PC-3 (cell line): ENCODE measurements at regions of chr1 and their contacts with region 1.

Region 1: GRCh38 chr1:161439280-161440232 is 65.7 kb upstream of the FCGR2A start:
- DNase-seq: peak; percentile 31
- ATAC-seq: no peak
- H3K4me3 ChIP-seq: peak overlapping the region; percentile 79
- H3K27ac ChIP-seq: no peak overlapping the region
- H3K4me1 ChIP-seq: peaks cover 7% of the 10 kb centered on the region
- H3K27me3 ChIP-seq: no peaks in the 10 kb centered on the region
- CTCF ChIP-seq: no peak

Region 2: GRCh38 chr1:161287482-161288054 is 152.0 kb before region 1 on chr1:
- CTCF ChIA-PET with region 1: no interaction called
- POLR2A ChIA-PET with region 1: no interaction called
- intact Hi-C with region 1: no loop called
- DNase-seq: no peak
- ATAC-seq: no peak
- H3K4me3 ChIP-seq: no peak overlapping the region
- H3K27ac ChIP-seq: no peak overlapping the region
- H3K4me1 ChIP-seq: no peaks in the 10 kb centered on the region
- H3K27me3 ChIP-seq: peaks cover 47% of the 10 kb centered on the region
- CTCF ChIP-seq: no peak

Region 3: DNA sequence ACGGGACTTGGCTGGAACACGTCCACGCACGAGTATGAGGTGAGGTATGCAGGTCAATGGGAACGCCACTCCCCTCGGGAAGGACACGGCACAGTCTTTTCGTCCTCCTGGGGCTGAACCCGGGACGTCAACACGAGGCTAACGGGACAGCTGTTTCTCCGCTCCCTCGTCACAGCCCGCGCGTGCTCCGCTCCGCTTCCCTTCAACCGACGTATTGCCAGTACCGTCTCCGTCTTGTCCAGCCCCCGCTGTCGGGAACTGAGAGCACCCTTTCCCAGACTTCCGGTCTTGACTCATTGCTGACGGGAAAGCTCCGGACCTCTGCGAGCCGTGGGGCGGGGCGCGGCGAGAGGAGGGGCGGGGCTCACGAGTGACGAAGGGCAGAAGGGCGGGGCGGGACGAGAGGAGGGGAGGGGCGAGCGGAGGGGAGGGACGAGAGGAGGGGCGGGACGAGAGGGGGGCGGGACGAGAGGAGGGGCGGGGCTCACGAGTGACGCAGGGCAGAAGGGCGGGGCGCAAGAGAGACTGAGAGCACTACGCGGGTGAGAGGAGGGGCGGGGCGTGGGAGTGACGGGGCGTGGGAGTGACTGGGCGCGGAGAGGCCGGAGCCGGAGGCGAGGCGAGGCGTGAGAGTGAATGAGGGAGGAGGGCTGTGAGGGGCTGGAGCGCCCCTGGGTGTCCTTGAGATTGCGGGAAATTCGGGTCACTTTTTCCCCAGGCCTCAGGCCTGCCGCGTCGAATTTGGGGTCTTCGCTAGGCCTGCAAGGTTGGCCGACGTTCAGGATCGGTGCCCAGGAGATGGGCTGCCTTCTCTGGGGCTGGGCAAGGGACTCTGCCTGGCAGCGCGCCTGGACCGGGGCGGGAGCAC is 49.6 kb before region 1 on chr1:
- CTCF ChIA-PET with region 1: no interaction called
- POLR2A ChIA-PET with region 1: no interaction called
- intact Hi-C with region 1: loop called (anchors 10 kb)
- DNase-seq: peak; percentile 98
- ATAC-seq: peak; percentile 87
- H3K4me3 ChIP-seq: peak overlapping the region; percentile 86
- H3K27ac ChIP-seq: peak overlapping the region; percentile 70
- H3K4me1 ChIP-seq: peaks cover 12% of the 10 kb centered on the region
- H3K27me3 ChIP-seq: no peaks in the 10 kb centered on the region
- CTCF ChIP-seq: no peak

Region 4: DNA sequence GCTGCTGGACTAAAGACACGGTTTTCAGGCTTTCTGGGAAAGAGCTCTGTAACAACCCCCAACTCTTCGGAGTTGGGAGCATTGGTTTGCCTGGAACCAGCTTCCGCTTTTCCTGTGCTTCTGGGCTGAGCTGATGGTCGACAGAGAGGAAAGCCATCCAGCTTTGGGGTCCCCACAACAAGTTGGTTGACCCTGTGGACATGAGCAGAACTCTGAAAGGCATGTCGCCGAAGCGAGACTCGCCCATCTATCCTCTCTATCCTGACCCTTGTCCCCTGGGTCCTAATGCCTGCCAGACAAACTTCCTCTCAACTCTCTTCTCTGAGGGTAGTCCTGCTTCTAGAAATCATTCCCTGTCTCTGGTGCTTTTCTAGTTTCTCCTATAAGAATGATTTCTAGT is 33.8 kb after region 1 on chr1:
- CTCF ChIA-PET with region 1: no interaction called
- POLR2A ChIA-PET with region 1: no interaction called
- intact Hi-C with region 1: no loop called
- DNase-seq: peak; percentile 52
- ATAC-seq: no peak
- H3K4me3 ChIP-seq: peak overlapping the region; percentile 57
- H3K27ac ChIP-seq: no peak overlapping the region
- H3K4me1 ChIP-seq: peaks cover 5% of the 10 kb centered on the region; the same call in 1 of the 2 replicates
- H3K27me3 ChIP-seq: no peaks in the 10 kb centered on the region
- CTCF ChIP-seq: no peak